Activated naive CD4-positive, alpha-beta T cell treated with anti-CD3 and anti-CD28 coated beads for 36 hours (primary cell): ENCODE measurements at regions of chr7 and their contacts with region 1.

Region 1: GRCh38 chr7:139035586-139036353 is at the start of gene ZC3HAV1L:
- DNase-seq: peak; percentile 58
- H3K4me3 Mint-ChIP-seq: peak within 1 kb of the TSS; percentile 79
- H3K27ac Mint-ChIP-seq: peak within 1 kb of the TSS; percentile 37
- H3K4me1 Mint-ChIP-seq: peaks cover 18% of the 10 kb centered on the region
- H3K27me3 Mint-ChIP-seq: no peaks in the 10 kb centered on the region
- total RNA-seq, gene ZC3HAV1L: 4.5 to 5.1 TPM

Region 2: GRCh38 chr7:138625849-138626230 is 409.9 kb before region 1 on chr7:
- CTCF ChIA-PET with region 1: no interaction called
- intact Hi-C with region 1: no loop called
- DNase-seq: peak; percentile 38
- H3K4me3 Mint-ChIP-seq: no peak overlapping the region
- H3K27ac Mint-ChIP-seq: peak overlapping the region; percentile 72
- H3K4me1 Mint-ChIP-seq: peaks cover 43% of the 10 kb centered on the region
- H3K27me3 Mint-ChIP-seq: no peaks in the 10 kb centered on the region

Region 3: DNA sequence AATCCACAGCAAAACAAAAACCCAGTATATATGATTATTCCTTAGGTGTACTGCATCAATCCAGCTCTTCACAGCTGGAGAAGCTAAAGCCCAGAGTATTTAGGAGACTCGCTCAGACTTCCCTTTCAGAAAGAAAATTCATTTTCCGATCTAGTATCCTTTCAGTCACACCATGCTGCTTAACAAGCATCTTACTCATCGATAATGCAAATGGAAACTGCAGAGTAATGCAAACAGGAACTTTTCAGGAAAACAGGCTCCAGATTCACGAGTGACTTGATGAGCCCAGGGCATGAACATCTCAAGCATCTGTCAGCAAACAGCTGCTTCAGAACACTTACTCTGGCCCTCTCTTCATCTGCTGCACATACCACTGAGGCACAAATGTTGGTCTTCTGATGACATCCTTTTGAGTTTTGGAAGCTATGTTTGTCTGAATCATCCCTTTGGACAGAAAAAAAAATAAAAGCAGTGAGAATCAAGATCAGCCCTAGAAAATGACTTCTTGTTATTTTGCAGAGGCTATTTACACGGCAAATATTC is 25.0 kb after region 1 on chr7:
- CTCF ChIA-PET with region 1: no interaction called
- intact Hi-C with region 1: no loop called
- DNase-seq: no peak
- H3K4me3 Mint-ChIP-seq: no peak overlapping the region
- H3K27ac Mint-ChIP-seq: peak overlapping the region; percentile 80
- H3K4me1 Mint-ChIP-seq: peaks cover 71% of the 10 kb centered on the region
- H3K27me3 Mint-ChIP-seq: no peaks in the 10 kb centered on the region

Region 4: DNA sequence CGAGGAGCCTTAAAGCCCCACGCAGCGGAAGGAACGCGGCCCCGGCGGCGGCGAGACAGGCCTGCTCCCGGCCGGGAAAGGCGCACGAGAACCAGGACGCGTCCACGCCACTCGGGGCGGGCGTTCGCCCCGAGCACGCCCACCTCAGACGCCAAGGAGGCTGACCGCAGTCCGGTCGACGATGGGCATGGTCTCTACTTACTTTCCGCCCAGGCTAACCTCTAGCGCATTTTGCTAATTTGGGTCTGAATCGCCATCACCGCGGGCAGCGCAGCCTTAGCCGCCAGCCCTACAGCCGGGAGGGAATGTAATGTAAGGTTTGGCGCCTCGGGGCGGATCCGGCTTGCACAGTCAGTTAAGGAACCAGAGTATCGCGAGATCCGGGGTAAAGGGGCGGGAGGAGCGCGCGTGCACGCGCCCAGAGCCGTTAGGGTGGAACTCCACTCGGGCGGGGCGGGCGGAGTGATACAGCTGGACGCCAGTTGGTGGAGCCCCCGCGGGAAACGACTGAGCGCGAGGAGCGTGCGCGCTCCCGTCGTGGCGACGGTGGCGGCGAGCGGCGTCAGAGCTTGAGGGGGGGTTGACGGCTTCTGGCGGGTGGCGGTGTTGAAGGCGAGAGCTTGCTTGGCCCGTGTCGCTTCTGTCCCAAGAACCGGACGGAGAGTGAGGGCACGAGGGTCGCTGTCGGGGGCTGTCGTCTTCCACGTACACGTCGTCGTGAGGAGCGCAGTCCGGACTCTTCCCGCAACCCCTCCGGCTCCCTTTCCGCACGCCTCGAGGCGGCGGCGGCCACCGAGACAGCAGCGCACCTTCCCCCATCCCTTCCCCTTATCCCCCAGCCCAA is 323.8 kb after region 1 on chr7 and contains the start of gene LUC7L2:
- CTCF ChIA-PET with region 1: no interaction called
- intact Hi-C with region 1: loop called (anchors 5 kb)
- DNase-seq: peak; percentile 100
- H3K4me3 Mint-ChIP-seq: peak within 1 kb of the TSS; percentile 93
- H3K27ac Mint-ChIP-seq: peak within 1 kb of the TSS; percentile 98
- H3K4me1 Mint-ChIP-seq: peaks cover 33% of the 10 kb centered on the region
- H3K27me3 Mint-ChIP-seq: no peaks in the 10 kb centered on the region
- total RNA-seq, gene LUC7L2: 132 to 138 TPM